ENCODE measurements at regions of chr3 and their contacts with region 1.

Region 1: DNA sequence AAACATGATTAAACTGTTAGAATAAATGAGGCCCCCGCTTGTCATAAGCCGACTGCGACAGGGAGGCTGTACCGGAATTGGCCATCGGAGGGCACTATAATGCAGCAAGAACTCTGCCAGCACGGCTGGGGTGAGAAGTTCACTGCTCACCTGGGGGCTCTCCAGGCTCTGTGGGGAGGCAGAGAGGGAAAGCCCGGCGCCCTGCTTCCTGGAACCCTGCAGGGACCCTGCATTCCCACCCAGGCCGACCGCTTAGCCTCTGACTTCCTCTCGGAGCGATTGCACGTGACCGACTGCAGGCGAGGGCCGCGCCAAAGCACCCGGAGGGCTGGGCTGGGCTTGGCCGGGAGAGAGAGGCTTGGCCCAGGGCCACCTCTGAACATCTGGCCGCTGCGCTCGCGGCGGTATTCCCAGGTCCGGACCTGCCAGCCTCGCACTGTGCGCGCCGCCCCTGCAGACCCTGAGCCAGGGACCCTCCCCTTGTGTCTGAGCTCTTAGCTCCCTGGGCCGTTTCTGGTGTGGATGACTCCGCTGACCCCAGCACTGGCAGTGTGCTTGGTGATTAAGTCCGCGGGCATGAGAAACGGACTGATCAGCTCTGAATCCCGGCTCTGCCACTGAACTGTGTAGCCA is 26.2 kb downstream of the DRD3 start:
- DNase-seq: peak; percentile 82
- H3K4me3 ChIP-seq: peak overlapping the region; percentile 23
- H3K27ac ChIP-seq: no peak overlapping the region
- H3K4me1 ChIP-seq: peaks cover 6% of the 10 kb centered on the region
- CTCF ChIP-seq: peak; percentile 97

Region 2: GRCh38 chr3:113838631-113839209 is 313.9 kb before region 1 on chr3 and contains the start of gene GRAMD1C:
- CTCF ChIA-PET with region 1: no interaction called
- POLR2A ChIA-PET with region 1: no interaction called
- intact Hi-C with region 1: loop called (anchors 5 kb)
- DNase-seq: peak; percentile 91
- H3K4me3 ChIP-seq: peak within 1 kb of the TSS; percentile 70
- H3K27ac ChIP-seq: no peak within 1 kb of the TSS
- H3K4me1 ChIP-seq: no peaks in the 10 kb centered on the region
- CTCF ChIP-seq: peak; percentile 89
- total RNA-seq, gene GRAMD1C: 4.1 and 6.1 TPM in 2 replicates

Region 3: DNA sequence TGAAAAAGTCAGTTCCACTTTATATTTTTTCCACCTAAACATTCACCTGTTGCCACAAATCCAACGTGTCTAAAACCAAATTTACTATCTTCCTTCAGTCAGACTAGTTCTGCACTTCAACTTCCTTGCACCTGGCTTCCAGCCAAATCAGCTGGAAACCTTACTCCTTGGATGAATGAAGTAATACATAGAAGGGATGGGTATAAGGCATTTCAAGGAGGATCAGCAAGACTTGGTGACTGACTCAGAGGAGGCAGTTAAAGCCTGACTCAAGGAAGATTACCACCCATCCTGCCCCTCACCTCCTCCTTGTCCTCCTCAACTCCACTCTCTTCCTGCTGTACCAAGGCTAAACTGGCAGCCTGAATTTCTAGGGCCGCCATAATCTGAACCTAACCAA is 59.0 kb before region 1 on chr3:
- CTCF ChIA-PET with region 1: no interaction called
- POLR2A ChIA-PET with region 1: no interaction called
- intact Hi-C with region 1: no loop called
- DNase-seq: no peak
- H3K4me3 ChIP-seq: no peak overlapping the region
- H3K27ac ChIP-seq: no peak overlapping the region
- H3K4me1 ChIP-seq: no peaks in the 10 kb centered on the region
- CTCF ChIP-seq: no peak

Region 4: DNA sequence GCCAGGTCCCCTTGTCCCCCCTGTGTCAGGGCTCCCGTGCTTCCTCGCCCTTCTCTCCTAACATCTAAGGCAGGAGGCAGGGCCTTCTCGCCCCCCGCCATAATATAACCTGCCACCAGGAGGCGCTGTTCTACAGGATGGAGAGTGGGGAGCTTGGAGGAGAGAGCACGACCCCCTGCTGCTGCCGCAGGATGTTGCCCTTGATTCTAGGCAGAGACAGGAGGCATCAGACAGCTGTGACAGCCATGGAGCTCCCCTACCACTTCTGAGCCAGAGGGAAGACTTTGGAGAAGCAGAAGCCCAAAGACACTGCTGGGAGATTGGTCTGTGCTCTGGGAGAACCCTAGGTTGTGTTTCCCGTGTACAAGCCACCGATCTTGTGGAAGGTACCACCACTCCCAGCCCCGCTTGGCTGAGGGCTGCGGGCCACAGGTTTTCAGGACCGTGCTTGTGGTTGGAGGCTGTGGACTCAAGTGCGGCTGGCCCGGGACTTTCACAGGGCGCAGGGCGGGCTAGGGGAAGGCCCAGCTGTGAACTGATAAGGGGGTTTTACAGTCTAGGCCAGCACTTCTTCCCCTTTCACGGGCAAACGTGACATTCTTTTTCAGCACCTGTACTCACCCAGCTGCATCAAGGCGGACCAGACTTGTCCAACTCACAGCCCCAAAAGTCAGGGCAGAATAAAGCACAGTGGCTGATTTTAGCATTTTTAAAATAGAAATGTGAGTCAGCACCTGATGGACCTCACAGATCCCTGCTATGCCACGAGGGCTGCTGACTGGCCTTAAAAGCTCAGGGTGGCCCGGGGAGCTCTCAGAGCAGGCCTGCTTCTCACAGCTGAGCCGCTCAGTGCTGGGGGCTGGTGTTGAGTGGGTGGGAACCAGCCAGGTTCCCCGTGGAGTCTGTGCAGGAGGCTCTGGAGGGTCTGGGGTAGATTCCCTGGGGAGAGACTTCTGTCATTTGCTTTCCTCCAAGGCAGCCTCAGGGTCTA is 138.6 kb after region 1 on chr3:
- CTCF ChIA-PET with region 1: interaction called, 3 read pairs
- POLR2A ChIA-PET with region 1: interaction called, 3 read pairs
- intact Hi-C with region 1: loop called (anchors 1 kb)
- DNase-seq: peak; percentile 84
- H3K4me3 ChIP-seq: no peak overlapping the region
- H3K27ac ChIP-seq: no peak overlapping the region
- H3K4me1 ChIP-seq: peaks cover 8% of the 10 kb centered on the region
- CTCF ChIP-seq: peak; percentile 92

Region 5: DNA sequence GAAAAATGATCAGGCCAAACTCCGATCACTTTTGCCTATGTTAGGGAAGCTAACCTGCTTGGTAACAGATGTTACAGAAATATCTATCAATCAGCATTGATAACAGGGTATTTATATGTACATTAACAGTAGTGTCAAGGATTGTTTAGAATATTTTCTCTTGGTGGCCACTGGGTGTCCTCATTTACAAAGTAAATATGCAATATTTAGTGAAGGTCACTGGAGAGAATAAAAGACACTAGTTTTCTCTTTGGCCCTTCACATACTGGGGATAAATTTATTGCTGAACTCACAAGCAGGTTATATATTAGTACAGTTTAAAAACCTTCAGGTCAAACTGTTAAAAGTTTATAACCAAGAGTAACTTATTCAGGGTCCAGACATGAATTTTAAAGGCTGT is 210.2 kb after region 1 on chr3:
- CTCF ChIA-PET with region 1: no interaction called
- POLR2A ChIA-PET with region 1: no interaction called
- intact Hi-C with region 1: loop called (anchors 5 kb)
- DNase-seq: peak; percentile 25
- H3K4me3 ChIP-seq: no peak overlapping the region
- H3K27ac ChIP-seq: no peak overlapping the region
- H3K4me1 ChIP-seq: no peaks in the 10 kb centered on the region
- CTCF ChIP-seq: peak; percentile 79

Measured in OCI-LY7 (cell line).